Dorsolateral prefrontal cortex (tissue), 120 donors: ENCODE measurements at regions of chr15 and their contacts with region 1.

Region 1: GRCh38 chr15:75639709-75640482 is at the start of gene IMP3:
- DNase-seq: peak; percentile 91 to 98 (median 96)
- H3K4me3 ChIP-seq: peak within 1 kb of the TSS; percentile 64 to 100 (median 93)
- H3K27ac ChIP-seq: peak within 1 kb of the TSS; percentile 53 to 99 (median 95)
- H3K27me3 ChIP-seq: no peaks in the 10 kb centered on the region
- CTCF ChIP-seq: peak in 31 of 56 donors; percentile 1 to 48 (median 28)
- total RNA-seq, gene IMP3: 32.2 to 67.9 (median 50.7) TPM

Region 2: GRCh38 chr15:75367913-75368688 is 271.8 kb before region 1 on chr15 and contains the start of gene MAN2C1:
- intact Hi-C with region 1: loop called (anchors 1 to 2 kb)
- DNase-seq: peak; percentile 78 to 96 (median 91)
- H3K4me3 ChIP-seq: peak within 1 kb of the TSS; percentile 62 to 99 (median 89)
- H3K27ac ChIP-seq: peak within 1 kb of the TSS; percentile 75 to 99 (median 94)
- H3K27me3 ChIP-seq: no peaks in the 10 kb centered on the region
- CTCF ChIP-seq: peak; percentile 58 to 90 (median 78)
- total RNA-seq, gene MAN2C1: 146 to 372 (median 229) TPM

Region 3: GRCh38 chr15:75578948-75579920 is 60.7 kb before region 1 on chr15 and contains the start of gene PTPN9:
- intact Hi-C with region 1: loop called in 1 of 2 experiments (anchors 10 kb)
- DNase-seq: peak; percentile 65 to 85 (median 81)
- H3K4me3 ChIP-seq: peak within 1 kb of the TSS; percentile 64 to 97 (median 88)
- H3K27ac ChIP-seq: peak within 1 kb of the TSS; percentile 45 to 98 (median 93)
- H3K27me3 ChIP-seq: no peaks in the 10 kb centered on the region
- CTCF ChIP-seq: peak in 53 of 56 donors; percentile 3 to 59 (median 43)
- total RNA-seq, gene PTPN9: 17.1 to 54.6 (median 33.8) TPM

Region 4: GRCh38 chr15:75684642-75685041 is 44.7 kb after region 1 on chr15:
- intact Hi-C with region 1: loop called (anchors 2 to 5 kb)
- DNase-seq: no peak
- H3K4me3 ChIP-seq: no peak overlapping the region
- H3K27ac ChIP-seq: no peak overlapping the region
- H3K27me3 ChIP-seq: no peaks in the 10 kb centered on the region
- CTCF ChIP-seq: no peak

Region 5: DNA sequence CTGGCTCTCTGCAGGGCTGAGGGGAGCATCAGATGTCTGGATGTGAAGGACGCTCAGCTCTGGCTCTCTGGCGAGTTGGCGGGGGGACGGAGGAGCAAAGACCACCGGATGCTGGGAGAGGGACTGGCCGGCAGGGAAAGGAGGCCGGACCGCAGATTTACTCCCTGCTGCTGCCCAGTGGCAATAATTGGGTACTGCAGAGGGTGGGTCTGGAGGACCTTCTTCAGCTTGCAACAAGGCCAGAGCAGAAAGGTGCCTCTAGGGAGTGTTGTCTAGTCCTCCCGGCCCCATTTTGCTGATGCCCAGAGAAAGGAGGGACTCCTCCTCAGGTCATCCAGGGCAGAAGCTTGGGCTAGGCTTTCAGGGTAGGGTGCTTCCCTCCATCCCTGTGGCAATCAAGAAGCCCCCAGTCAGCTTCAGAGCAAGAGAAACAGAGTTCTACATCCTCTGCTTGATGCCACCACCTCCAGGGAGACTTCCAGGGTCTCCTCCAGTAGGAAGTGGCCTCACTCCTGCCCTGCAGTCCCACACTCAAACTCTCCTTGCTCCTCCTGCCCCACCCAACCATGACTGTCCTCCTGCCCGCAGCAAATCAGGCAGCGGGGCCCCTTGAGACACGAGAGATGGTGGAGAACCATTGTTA is 93.0 kb after region 1 on chr15:
- intact Hi-C with region 1: no loop called
- DNase-seq: peak; percentile 52 to 81 (median 70)
- H3K4me3 ChIP-seq: peak overlapping the region in 8 of 59 donors; percentile 8 to 35 (median 21)
- H3K27ac ChIP-seq: peak overlapping the region in 9 of 59 donors; percentile 8 to 73 (median 35)
- H3K27me3 ChIP-seq: no peaks in the 10 kb centered on the region
- CTCF ChIP-seq: peak; percentile 50 to 93 (median 84)

Region 6: DNA sequence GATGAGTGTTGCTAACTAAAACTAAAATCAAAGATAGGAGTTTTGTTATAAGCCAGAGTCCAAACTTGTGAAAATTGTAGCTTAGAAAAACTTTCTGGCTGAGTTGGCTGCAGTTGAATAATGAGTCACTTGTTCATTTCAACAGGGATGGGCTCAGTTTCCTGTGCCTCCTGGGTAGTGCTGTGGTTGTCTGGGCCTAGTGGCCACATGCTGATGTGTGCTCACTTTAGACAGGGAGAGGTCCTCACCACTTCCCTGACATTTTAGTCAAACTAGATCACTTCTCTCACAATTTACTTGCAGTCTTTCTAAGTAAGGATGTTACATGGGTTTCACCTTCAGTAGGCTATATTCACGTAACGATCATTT is 197.0 kb after region 1 on chr15:
- intact Hi-C with region 1: no loop called
- DNase-seq: no peak
- H3K4me3 ChIP-seq: no peak overlapping the region
- H3K27ac ChIP-seq: no peak overlapping the region
- H3K27me3 ChIP-seq: peaks cover 0 to 3% (median 0%) of the 10 kb centered on the region in 45 donors
- CTCF ChIP-seq: no peak